ENCODE measurements at regions of chr10 and their contacts with region 1.

Region 1: DNA sequence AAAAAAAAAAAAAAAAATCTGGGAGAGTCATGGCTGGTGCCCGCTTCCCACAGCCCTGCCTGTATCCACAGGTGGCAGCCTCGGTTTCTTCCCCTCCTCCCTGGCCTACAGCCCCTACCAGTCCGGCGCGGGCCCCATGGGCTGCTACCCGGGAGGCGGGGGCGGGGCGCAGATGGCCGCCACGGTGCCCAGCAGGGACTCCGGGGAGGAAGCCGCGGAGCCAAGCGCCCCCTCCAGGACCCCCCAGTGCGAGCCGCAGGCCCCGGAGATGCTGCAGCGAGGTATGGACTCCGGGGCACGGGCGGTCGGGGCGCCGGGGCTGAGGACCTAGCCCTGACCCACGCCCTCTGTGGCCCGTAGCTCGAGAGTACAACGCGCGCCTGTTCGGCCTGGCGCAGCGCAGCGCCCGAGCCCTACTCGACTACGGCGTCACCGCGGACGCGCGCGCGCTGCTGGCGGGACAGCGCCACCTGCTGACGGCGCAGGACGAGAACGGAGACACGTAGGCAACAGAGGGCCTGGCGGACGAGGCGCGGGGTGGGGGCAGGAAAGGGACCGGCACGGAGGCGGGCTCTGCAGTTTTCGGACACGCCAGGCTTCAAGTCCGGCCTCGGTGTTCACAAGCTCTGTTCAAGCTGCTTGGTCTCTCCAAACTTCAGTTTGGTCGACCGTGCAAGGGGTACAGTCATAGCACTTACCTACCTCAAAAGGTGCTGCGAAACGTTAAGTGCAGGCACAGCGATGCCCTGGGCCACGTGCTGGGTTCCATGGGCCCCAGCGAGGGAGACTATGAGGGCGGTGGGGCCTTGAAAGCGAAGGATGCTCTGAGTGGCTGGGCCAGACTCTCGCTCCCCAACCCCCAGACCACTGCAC is 3.9 kb downstream of the NFKB2 start:
- DNase-seq: peak; percentile 82 to 90 (median 87)
- H3K4me3 ChIP-seq: peak overlapping the region; percentile 28
- H3K4me3 Mint-ChIP-seq: peak overlapping the region; percentile 70 to 97 (median 76)
- H3K27ac ChIP-seq: peak overlapping the region; percentile 61
- H3K27ac Mint-ChIP-seq: peak overlapping the region; percentile 65 to 100 (median 99)
- H3K4me1 ChIP-seq: peaks cover 33% of the 10 kb centered on the region
- H3K4me1 Mint-ChIP-seq: peaks cover 24 to 48% (median 28%) of the 10 kb centered on the region in 3 donors
- H3K27me3 ChIP-seq: no peaks in the 10 kb centered on the region
- H3K27me3 Mint-ChIP-seq: peaks cover 0 to 4% of the 10 kb centered on the region in 2 donors

Region 2: GRCh38 chr10:102334101-102334500 is 65.4 kb before region 1 on chr10:
- CTCF ChIA-PET with region 1: no interaction called
- POLR2A ChIA-PET with region 1: no interaction called
- DNase-seq: no peak
- H3K4me3 ChIP-seq: no peak overlapping the region
- H3K4me3 Mint-ChIP-seq: no peak overlapping the region
- H3K27ac ChIP-seq: no peak overlapping the region
- H3K27ac Mint-ChIP-seq: peak overlapping the region in 2 of 8 donors; percentile 54 to 55
- H3K4me1 ChIP-seq: no peaks in the 10 kb centered on the region
- H3K4me1 Mint-ChIP-seq: peaks cover 8% of the 10 kb centered on the region in 3 donors
- H3K27me3 ChIP-seq: no peaks in the 10 kb centered on the region
- H3K27me3 Mint-ChIP-seq: no peaks in the 10 kb centered on the region

Region 3: GRCh38 chr10:102384053-102384452 is 15.4 kb before region 1 on chr10:
- CTCF ChIA-PET with region 1: interaction called, 21 read pairs
- POLR2A ChIA-PET with region 1: no interaction called
- DNase-seq: no peak
- H3K4me3 ChIP-seq: no peak overlapping the region
- H3K4me3 Mint-ChIP-seq: no peak overlapping the region
- H3K27ac ChIP-seq: no peak overlapping the region
- H3K27ac Mint-ChIP-seq: peak overlapping the region in 1 of 8 donors; percentile 18
- H3K4me1 ChIP-seq: no peaks in the 10 kb centered on the region
- H3K4me1 Mint-ChIP-seq: no peaks in the 10 kb centered on the region
- H3K27me3 ChIP-seq: no peaks in the 10 kb centered on the region
- H3K27me3 Mint-ChIP-seq: no peaks in the 10 kb centered on the region

Region 4: GRCh38 chr10:102420810-102421644 is 21.6 kb after region 1 on chr10 and contains the start of gene FBXL15:
- CTCF ChIA-PET with region 1: interaction called, 37 read pairs
- POLR2A ChIA-PET with region 1: interaction called, 30 read pairs
- DNase-seq: peak; percentile 86 to 96 (median 91)
- H3K4me3 ChIP-seq: peak within 1 kb of the TSS; percentile 95
- H3K4me3 Mint-ChIP-seq: peak within 1 kb of the TSS; percentile 92 to 99 (median 99)
- H3K27ac ChIP-seq: peak within 1 kb of the TSS; percentile 74
- H3K27ac Mint-ChIP-seq: peak within 1 kb of the TSS; percentile 89 to 98 (median 96)
- H3K4me1 ChIP-seq: peaks cover 35% of the 10 kb centered on the region
- H3K4me1 Mint-ChIP-seq: peaks cover 20 to 53% (median 32%) of the 10 kb centered on the region in 3 donors
- H3K27me3 ChIP-seq: peaks cover 2% of the 10 kb centered on the region
- H3K27me3 Mint-ChIP-seq: peaks cover 17% of the 10 kb centered on the region in 2 donors
- total RNA-seq, gene FBXL15: 13.5 to 16.3 TPM

Region 5: GRCh38 chr10:102450194-102450938 is 50.9 kb after region 1 on chr10:
- CTCF ChIA-PET with region 1: interaction called, 25 read pairs
- POLR2A ChIA-PET with region 1: interaction called, 24 read pairs
- DNase-seq: peak; percentile 82 to 95 (median 94)
- H3K4me3 ChIP-seq: peak overlapping the region; percentile 91
- H3K4me3 Mint-ChIP-seq: peak overlapping the region; percentile 93 to 98 (median 95)
- H3K27ac ChIP-seq: peak overlapping the region; percentile 87
- H3K27ac Mint-ChIP-seq: peak overlapping the region; percentile 74 to 99 (median 97)
- H3K4me1 ChIP-seq: peaks cover 16% of the 10 kb centered on the region
- H3K4me1 Mint-ChIP-seq: peaks cover 21 to 28% (median 24%) of the 10 kb centered on the region in 3 donors
- H3K27me3 ChIP-seq: no peaks in the 10 kb centered on the region
- H3K27me3 Mint-ChIP-seq: no peaks in the 10 kb centered on the region

Region 6: GRCh38 chr10:102484021-102484420 is 84.6 kb after region 1 on chr10:
- CTCF ChIA-PET with region 1: interaction called, 34 read pairs
- POLR2A ChIA-PET with region 1: interaction called, 3 read pairs
- DNase-seq: no peak
- H3K4me3 ChIP-seq: no peak overlapping the region
- H3K4me3 Mint-ChIP-seq: no peak overlapping the region
- H3K27ac ChIP-seq: no peak overlapping the region
- H3K27ac Mint-ChIP-seq: peak overlapping the region in 1 of 8 donors; percentile 21
- H3K4me1 ChIP-seq: no peaks in the 10 kb centered on the region
- H3K4me1 Mint-ChIP-seq: peaks cover 1 to 2% (median 1%) of the 10 kb centered on the region in 3 donors
- H3K27me3 ChIP-seq: no peaks in the 10 kb centered on the region
- H3K27me3 Mint-ChIP-seq: no peaks in the 10 kb centered on the region